Right ventricle myocardium inferior (tissue), 1 donor: ENCODE measurements at regions of chr3 and their contacts with region 1.

Region 1: GRCh38 chr3:34568766-34569165 is 770.3 kb downstream of the PDCD6IP start:
- DNase-seq: no peak
- ATAC-seq: peak; percentile 39

Region 2: DNA sequence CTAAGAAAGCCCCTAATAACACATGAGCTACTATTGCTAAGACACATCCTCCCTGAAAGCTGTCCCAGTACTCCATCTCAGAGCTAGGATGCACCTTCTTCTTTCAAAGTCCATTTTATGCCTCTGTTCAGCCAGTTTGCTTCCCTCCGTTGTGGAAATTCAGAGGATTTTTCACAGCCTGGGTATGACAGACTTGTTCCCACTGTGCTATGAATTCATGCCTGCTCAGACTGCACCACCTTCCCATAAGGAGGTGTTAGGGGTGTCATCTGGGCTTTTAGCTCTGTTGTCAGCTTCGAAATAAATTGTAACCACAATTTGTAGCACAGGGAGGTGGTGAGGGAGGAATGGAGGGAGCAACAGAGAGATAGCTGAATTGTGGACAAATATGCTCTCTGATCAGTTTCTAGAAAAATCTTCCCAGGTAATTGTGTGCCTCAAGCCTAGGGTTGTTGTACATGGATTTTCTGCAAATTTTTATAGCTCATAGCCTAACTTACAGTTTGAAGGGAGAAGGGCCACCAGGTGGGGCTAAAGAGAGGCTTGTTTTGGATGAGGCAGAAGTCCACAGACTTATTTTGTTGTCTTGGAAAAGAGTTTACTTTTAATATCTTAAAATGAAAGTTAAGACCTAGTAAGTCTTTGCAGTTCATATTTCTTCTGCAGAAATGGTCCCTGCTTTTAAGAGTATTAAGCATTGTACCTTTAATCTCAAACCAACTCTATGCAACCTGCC is 308.3 kb before region 1 on chr3:
- intact Hi-C with region 1: loop called (anchors 10 kb)
- DNase-seq: no peak
- ATAC-seq: no peak

Region 3: GRCh38 chr3:34634939-34635338 is 66.2 kb after region 1 on chr3:
- intact Hi-C with region 1: no loop called
- DNase-seq: no peak
- ATAC-seq: no peak